Tibial artery (tissue), 4 donors: ENCODE measurements at regions of chr1 and their contacts with region 1.

Region 1: GRCh38 chr1:66924756-66925557 is at the starts of genes DNAI4 and MIER1:
- DNase-seq: peak; percentile 98 to 99
- H3K4me3 ChIP-seq: peak within 1 kb of the TSS; percentile 73 to 81
- H3K27ac ChIP-seq: peak within 1 kb of the TSS; percentile 93 to 97
- H3K4me1 ChIP-seq: peaks cover 0 to 34% (median 27%) of the 10 kb centered on the region in 4 donors
- H3K27me3 ChIP-seq: no peaks in the 10 kb centered on the region
- CTCF ChIP-seq: peak; percentile 36 to 46

Region 2: GRCh38 chr1:66533804-66534740 is 390.9 kb before region 1 on chr1 and contains the start of gene SGIP1:
- intact Hi-C with region 1: loop called (anchors 10 kb)
- DNase-seq: peak; percentile 79 to 89
- H3K4me3 ChIP-seq: peak within 1 kb of the TSS; percentile 57 to 61
- H3K27ac ChIP-seq: peak within 1 kb of the TSS; percentile 91 to 92
- H3K4me1 ChIP-seq: peaks cover 8 to 63% (median 13%) of the 10 kb centered on the region in 4 donors
- H3K27me3 ChIP-seq: no peaks in the 10 kb centered on the region
- CTCF ChIP-seq: no peak

Region 3: GRCh38 chr1:67053785-67054772 is 129.1 kb after region 1 on chr1 and contains the start of gene SLC35D1:
- intact Hi-C with region 1: loop called (anchors 10 kb)
- DNase-seq: peak; percentile 70 to 87
- H3K4me3 ChIP-seq: peak within 1 kb of the TSS; percentile 74 to 81
- H3K27ac ChIP-seq: peak within 1 kb of the TSS; percentile 92 to 93
- H3K4me1 ChIP-seq: peaks cover 0 to 30% (median 11%) of the 10 kb centered on the region in 4 donors
- H3K27me3 ChIP-seq: no peaks in the 10 kb centered on the region
- CTCF ChIP-seq: no peak

Region 4: DNA sequence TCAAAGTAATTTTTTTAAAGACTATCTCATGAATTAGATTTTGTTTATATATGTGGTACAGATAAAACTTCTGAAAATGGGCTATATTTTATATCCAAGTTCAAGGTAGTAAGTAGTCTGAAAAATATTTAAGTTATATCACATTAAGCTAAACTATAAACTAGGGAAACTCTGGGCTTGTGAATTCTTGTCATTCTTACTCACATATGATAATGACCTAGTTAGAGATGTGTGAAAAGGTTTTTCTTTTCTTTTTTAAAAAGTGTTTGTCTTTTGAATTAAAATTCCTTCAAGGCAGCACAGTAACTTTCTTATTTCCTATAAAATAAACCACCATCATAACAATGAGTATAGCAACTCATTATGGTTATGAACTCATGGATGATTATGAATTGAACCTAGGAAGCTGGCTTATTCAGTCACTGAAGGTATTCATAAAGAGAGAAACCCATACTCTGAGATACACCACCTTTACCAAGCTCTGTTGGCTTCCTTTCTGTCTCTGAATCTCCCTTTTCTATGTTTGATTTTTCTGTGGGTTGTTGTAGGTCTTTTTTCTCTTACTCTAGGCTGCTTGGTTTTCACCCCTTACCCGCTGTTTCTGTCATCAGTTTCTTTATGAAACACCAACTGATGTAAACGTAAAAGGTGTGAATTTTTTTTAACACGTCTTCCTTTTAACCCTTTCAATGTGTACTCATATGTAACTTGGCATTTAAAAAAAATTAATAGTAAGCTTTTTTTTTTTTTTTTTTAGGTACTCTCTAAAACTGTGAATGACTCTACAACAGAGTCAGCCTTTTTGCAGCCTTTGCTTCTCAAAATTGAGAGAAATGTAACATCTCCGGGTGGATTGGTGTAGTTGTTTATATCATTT is 407.9 kb after region 1 on chr1:
- intact Hi-C with region 1: no loop called
- DNase-seq: no peak
- H3K4me3 ChIP-seq: no peak overlapping the region
- H3K27ac ChIP-seq: no peak overlapping the region
- H3K4me1 ChIP-seq: no peaks in the 10 kb centered on the region
- H3K27me3 ChIP-seq: no peaks in the 10 kb centered on the region
- CTCF ChIP-seq: no peak